ENCODE measurements at regions of chr10 and their contacts with region 1.

Region 1: DNA sequence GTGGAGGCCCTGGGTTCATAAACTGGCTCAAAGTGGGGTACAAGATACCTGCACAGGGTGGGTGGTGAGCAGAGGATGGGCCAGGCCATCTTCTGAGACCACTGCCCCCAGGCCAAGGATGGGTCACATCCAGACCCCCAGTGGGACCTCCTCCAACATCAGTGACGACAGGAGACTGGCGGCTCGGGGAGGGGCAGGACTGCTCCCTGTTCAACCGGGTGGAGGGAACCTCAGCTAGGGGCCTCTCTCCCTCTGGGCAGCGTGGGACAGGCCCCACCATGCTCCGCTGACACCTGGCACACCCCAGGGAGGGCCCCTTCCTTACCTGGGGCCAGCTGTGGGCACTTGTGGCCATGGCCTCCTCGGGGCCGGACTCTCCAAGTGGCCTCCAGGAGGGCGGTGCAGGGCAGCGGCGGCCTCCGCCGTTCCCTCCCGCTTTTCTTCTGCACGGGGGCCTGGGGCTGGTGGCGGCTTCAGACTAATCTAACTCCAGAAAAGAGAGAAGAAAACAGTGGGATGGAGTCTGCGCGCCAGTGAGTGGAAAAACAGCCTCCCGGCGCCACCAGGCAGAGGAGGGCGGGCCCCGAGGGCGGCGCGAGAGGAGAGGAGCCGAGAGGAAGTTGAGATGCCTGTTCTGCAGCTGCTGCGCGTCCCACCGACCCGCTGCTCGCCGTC is at the start of gene CALHM2:
- DNase-seq: peak; percentile 18 to 81 (median 57)
- ATAC-seq: peak; percentile 70
- H3K4me3 ChIP-seq: peak within 1 kb of the TSS; percentile 78 to 97
- H3K4me3 Mint-ChIP-seq: peak within 1 kb of the TSS; percentile 92
- H3K27ac ChIP-seq: peak within 1 kb of the TSS; percentile 43 to 76
- H3K27ac Mint-ChIP-seq: peak within 1 kb of the TSS; percentile 84
- H3K4me1 ChIP-seq: peaks cover 45% of the 10 kb centered on the region
- H3K4me1 Mint-ChIP-seq: peaks cover 51% of the 10 kb centered on the region
- H3K27me3 ChIP-seq: no peaks in the 10 kb centered on the region
- H3K27me3 Mint-ChIP-seq: no peaks in the 10 kb centered on the region
- CTCF ChIP-seq: no peak
- total RNA-seq, gene CALHM2: 1.6 to 1.7 TPM

Region 2: DNA sequence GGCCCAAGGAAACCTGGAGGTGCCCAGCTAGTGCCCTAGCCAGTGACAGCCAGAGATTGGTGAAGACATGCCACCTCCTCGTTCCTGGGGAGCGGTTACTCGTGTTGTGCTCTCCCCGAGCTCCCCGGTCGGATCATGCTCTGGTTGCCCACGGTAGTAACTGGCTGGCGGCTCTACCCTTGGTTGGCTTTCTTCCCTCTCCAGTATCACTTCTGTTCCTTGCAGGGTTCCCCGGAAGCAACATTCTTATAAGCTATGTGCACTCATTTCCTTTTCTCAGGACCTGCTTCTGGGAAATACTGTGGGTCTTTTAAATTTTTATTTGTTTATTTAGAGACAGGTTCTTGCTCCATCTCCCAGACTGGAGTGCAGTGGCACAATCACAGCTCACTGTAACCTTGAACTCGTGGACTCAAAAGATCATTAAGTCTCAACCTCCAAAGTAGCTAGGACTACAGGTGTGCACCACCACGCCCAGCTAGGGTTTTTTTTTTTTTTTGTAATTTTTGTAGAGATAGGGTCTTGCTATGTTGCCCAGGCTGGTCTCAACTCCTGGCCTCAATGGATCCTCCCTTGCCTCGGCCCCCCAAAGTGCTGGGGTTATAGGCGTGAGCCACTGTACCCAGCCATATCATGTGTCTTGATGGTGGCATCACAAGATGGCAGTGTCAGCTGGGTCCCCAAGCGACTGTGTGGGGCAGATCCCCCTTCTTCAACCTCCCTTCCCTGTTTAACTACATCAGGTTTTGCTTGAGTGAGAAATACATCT is 13.6 kb after region 1 on chr10:
- CTCF ChIA-PET with region 1: interaction called, 12 read pairs
- POLR2A ChIA-PET with region 1: interaction called, 5 read pairs
- intact Hi-C with region 1: loop called in 1 of 2 experiments (anchors 2 kb)
- DNase-seq: no peak
- ATAC-seq: no peak
- H3K4me3 ChIP-seq: no peak overlapping the region
- H3K4me3 Mint-ChIP-seq: no peak overlapping the region
- H3K27ac ChIP-seq: no peak overlapping the region
- H3K27ac Mint-ChIP-seq: no peak overlapping the region
- H3K4me1 ChIP-seq: peaks cover 5% of the 10 kb centered on the region
- H3K4me1 Mint-ChIP-seq: peaks cover 19% of the 10 kb centered on the region
- H3K27me3 ChIP-seq: no peaks in the 10 kb centered on the region
- H3K27me3 Mint-ChIP-seq: no peaks in the 10 kb centered on the region
- CTCF ChIP-seq: no peak

Region 3: GRCh38 chr10:103470761-103471653 is 19.0 kb after region 1 on chr10:
- CTCF ChIA-PET with region 1: interaction called, 12 read pairs
- POLR2A ChIA-PET with region 1: interaction called, 21 read pairs
- intact Hi-C with region 1: loop called (anchors 1 to 2 kb)
- DNase-seq: peak; percentile 36 to 90 (median 79)
- ATAC-seq: peak; percentile 91
- H3K4me3 ChIP-seq: peak overlapping the region; percentile 19 to 27
- H3K4me3 Mint-ChIP-seq: peak overlapping the region; percentile 71
- H3K27ac ChIP-seq: peak overlapping the region; percentile 26 to 87
- H3K27ac Mint-ChIP-seq: peak overlapping the region; percentile 91
- H3K4me1 ChIP-seq: peaks cover 28% of the 10 kb centered on the region
- H3K4me1 Mint-ChIP-seq: peaks cover 38% of the 10 kb centered on the region
- H3K27me3 ChIP-seq: no peaks in the 10 kb centered on the region
- H3K27me3 Mint-ChIP-seq: no peaks in the 10 kb centered on the region
- CTCF ChIP-seq: no peak

Measured in CD8-positive, alpha-beta T cell (primary cell).